Heart right ventricle (tissue), 16 donors: ENCODE measurements at regions of chrX and their contacts with region 1.

Region 1: DNA sequence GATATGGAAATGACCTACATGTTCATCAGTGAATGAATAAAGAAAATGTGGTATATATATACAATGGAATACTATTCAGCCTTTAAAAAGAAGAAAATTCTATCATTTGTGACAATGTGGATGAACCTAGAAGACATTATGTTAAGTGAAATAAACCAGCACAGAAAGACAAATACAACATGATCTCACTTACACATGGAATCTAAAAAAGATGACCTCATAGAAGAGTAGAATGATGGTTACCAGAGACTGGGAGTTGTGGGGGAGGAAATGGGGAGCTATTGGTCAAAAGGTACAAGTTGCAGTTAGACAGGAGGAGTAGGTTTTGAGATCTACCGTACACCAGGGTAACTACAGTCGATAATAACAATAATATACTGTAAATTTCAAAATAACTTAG is 51.5 kb downstream of the WNK3 start:
- DNase-seq: no peak
- ATAC-seq: no peak
- H3K4me3 ChIP-seq: no peak overlapping the region
- H3K27ac ChIP-seq: no peak overlapping the region
- H3K4me1 ChIP-seq: no peaks in the 10 kb centered on the region
- H3K27me3 ChIP-seq: peaks cover 0 to 13% (median 0%) of the 10 kb centered on the region in 7 donors
- CTCF ChIP-seq: no peak

Region 2: GRCh38 chrX:54271664-54272063 is 34.7 kb before region 1 on chrX:
- intact Hi-C with region 1: no loop called
- DNase-seq: no peak
- ATAC-seq: no peak
- H3K4me3 ChIP-seq: no peak overlapping the region
- H3K27ac ChIP-seq: no peak overlapping the region
- H3K4me1 ChIP-seq: no peaks in the 10 kb centered on the region
- H3K27me3 ChIP-seq: peaks cover 0 to 34% (median 0%) of the 10 kb centered on the region in 7 donors
- CTCF ChIP-seq: no peak

Region 3: DNA sequence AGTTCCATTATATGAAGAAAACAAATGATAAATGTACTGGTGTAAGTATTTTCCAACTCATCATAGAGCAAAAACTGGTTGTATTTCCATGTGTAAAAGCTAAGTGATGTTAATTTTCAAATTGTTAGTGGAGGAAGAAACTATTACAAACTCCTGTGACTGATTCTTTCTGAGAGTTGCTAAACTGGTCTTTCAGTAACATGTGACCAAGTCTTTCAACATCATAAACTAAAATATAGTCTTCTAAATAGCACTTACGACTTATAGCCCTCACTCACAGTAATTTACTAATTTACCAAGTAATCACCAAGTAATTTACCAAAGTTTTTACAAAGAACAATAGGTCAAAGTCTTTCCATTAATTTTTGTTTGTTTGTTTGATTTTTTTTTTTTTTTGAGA is 19.3 kb after region 1 on chrX:
- intact Hi-C with region 1: loop called in 1 of 10 experiments (anchors 1 kb)
- DNase-seq: no peak
- ATAC-seq: no peak
- H3K4me3 ChIP-seq: no peak overlapping the region
- H3K27ac ChIP-seq: no peak overlapping the region
- H3K4me1 ChIP-seq: no peaks in the 10 kb centered on the region
- H3K27me3 ChIP-seq: peaks cover 0 to 43% (median 0%) of the 10 kb centered on the region in 7 donors
- CTCF ChIP-seq: no peak